CD4-positive, alpha-beta T cell (primary cell): ENCODE measurements at regions of chr18 and their contacts with region 1.

Region 1: GRCh38 chr18:26226229-26227005 is at the start of gene TAF4B:
- DNase-seq: peak; percentile 85 to 96 (median 90)
- ATAC-seq: peak; percentile 87
- H3K4me3 ChIP-seq: peak within 1 kb of the TSS; percentile 73
- H3K4me3 Mint-ChIP-seq: peak within 1 kb of the TSS; percentile 98
- H3K27ac ChIP-seq: peak within 1 kb of the TSS; percentile 80 to 87
- H3K27ac Mint-ChIP-seq: peak within 1 kb of the TSS; percentile 99
- H3K4me1 ChIP-seq: peaks cover 11% of the 10 kb centered on the region
- H3K4me1 Mint-ChIP-seq: peaks cover 45% of the 10 kb centered on the region
- H3K27me3 ChIP-seq: no peaks in the 10 kb centered on the region
- H3K27me3 Mint-ChIP-seq: no peaks in the 10 kb centered on the region
- CTCF ChIP-seq: no peak
- total RNA-seq, gene TAF4B: 13.7 to 14.1 TPM

Region 2: GRCh38 chr18:26176134-26176533 is 50.3 kb before region 1 on chr18:
- CTCF ChIA-PET with region 1: no interaction called
- POLR2A ChIA-PET with region 1: interaction called, 5 read pairs
- intact Hi-C with region 1: loop called in 1 of 2 experiments (anchors 5 kb)
- DNase-seq: no peak
- ATAC-seq: peak; percentile 51
- H3K4me3 ChIP-seq: no peak overlapping the region
- H3K4me3 Mint-ChIP-seq: no peak overlapping the region
- H3K27ac ChIP-seq: no peak overlapping the region
- H3K27ac Mint-ChIP-seq: peak overlapping the region; percentile 22
- H3K4me1 ChIP-seq: peaks cover 3% of the 10 kb centered on the region
- H3K4me1 Mint-ChIP-seq: peaks cover 15% of the 10 kb centered on the region
- H3K27me3 ChIP-seq: no peaks in the 10 kb centered on the region
- H3K27me3 Mint-ChIP-seq: no peaks in the 10 kb centered on the region
- CTCF ChIP-seq: no peak

Region 3: DNA sequence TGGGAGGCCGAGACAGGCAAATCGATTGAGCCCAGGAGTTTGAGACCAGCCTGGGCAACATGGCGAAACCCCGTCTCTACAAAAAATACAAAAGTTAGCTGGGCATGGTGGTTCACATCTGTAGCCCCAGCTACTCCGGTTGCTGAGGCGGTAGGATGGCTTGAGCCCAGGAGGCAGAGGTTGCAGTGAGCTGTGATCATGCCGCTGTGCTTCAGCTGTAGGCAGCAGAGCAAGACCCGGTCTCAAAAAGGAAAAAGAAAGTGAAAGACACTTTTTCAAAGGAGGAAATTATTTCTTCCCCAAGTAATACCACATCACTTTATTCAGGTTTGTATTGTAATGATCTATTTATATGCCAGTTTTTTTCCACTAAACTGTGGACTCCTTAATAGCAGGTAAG is 35.9 kb before region 1 on chr18:
- CTCF ChIA-PET with region 1: no interaction called
- POLR2A ChIA-PET with region 1: interaction called, 13 read pairs
- intact Hi-C with region 1: loop called in 1 of 2 experiments (anchors 2 kb)
- DNase-seq: peak; percentile 6 to 78 (median 34)
- ATAC-seq: peak; percentile 93
- H3K4me3 ChIP-seq: peak overlapping the region; percentile 41
- H3K4me3 Mint-ChIP-seq: peak overlapping the region; percentile 70
- H3K27ac ChIP-seq: peak overlapping the region; percentile 5 to 29
- H3K27ac Mint-ChIP-seq: peak overlapping the region; percentile 71
- H3K4me1 ChIP-seq: peaks cover 8% of the 10 kb centered on the region
- H3K4me1 Mint-ChIP-seq: peaks cover 31% of the 10 kb centered on the region
- H3K27me3 ChIP-seq: no peaks in the 10 kb centered on the region
- H3K27me3 Mint-ChIP-seq: no peaks in the 10 kb centered on the region
- CTCF ChIP-seq: no peak

Region 4: DNA sequence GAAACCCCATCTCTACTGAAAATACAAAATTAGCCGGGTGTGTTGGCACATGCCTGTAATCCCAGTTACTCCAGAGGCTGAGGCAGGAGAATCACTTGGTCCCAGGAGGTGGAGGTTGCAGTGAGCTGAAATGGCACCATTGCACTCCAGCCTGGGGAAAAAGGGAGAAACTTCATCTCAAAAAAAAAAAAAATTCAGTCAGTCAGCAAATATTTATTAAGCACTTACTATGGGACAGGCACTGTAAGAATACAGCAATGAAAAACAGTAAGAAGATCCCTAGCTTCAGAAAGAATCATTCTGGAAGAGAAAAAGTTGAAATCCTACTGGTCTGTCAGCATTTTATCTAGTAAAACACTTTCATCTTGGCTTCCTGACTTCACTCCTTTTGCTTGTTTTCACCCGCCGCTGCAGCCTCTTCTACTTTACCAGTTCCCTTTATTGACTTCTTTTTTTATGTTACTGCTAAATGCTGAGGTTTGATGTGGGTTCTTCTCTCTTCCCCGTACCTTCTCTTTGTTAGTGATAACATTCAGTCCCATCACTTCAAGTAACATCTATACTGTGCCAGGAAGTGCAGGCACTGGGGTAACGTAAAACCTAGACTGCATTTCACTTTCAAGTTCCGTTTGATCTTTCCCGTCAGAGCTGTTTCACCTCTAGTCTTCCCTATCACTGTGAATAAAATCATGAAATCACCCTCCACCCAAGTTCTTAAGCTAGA is 11.0 kb before region 1 on chr18:
- CTCF ChIA-PET with region 1: no interaction called
- POLR2A ChIA-PET with region 1: interaction called, 55 read pairs
- intact Hi-C with region 1: loop called in 1 of 2 experiments (anchors 1 kb)
- DNase-seq: peak; percentile 22 to 86 (median 53)
- ATAC-seq: peak; percentile 98
- H3K4me3 ChIP-seq: peak overlapping the region; percentile 34
- H3K4me3 Mint-ChIP-seq: peak overlapping the region; percentile 49
- H3K27ac ChIP-seq: peak overlapping the region in 1 of 2 donors; percentile 50
- H3K27ac Mint-ChIP-seq: peak overlapping the region; percentile 77
- H3K4me1 ChIP-seq: peaks cover 18% of the 10 kb centered on the region
- H3K4me1 Mint-ChIP-seq: peaks cover 26% of the 10 kb centered on the region
- H3K27me3 ChIP-seq: no peaks in the 10 kb centered on the region
- H3K27me3 Mint-ChIP-seq: no peaks in the 10 kb centered on the region
- CTCF ChIP-seq: no peak